Dendritic cell treated with granulocyte-macrophage colony-stimulating factor and Interleukin-4, amounts not matched to agents 40 ng/mL and 50 ng/mL, for 4 days (primary cell): ENCODE measurements at regions of chr18 and their contacts with region 1.

Region 1: GRCh38 chr18:11891737-11892136 is 16.4 kb downstream of the MPPE1 start:
- H3K4me3 Mint-ChIP-seq: no peak overlapping the region
- H3K27ac Mint-ChIP-seq: no peak overlapping the region
- H3K4me1 Mint-ChIP-seq: peaks cover 47% of the 10 kb centered on the region
- H3K27me3 Mint-ChIP-seq: no peaks in the 10 kb centered on the region

Region 2: DNA sequence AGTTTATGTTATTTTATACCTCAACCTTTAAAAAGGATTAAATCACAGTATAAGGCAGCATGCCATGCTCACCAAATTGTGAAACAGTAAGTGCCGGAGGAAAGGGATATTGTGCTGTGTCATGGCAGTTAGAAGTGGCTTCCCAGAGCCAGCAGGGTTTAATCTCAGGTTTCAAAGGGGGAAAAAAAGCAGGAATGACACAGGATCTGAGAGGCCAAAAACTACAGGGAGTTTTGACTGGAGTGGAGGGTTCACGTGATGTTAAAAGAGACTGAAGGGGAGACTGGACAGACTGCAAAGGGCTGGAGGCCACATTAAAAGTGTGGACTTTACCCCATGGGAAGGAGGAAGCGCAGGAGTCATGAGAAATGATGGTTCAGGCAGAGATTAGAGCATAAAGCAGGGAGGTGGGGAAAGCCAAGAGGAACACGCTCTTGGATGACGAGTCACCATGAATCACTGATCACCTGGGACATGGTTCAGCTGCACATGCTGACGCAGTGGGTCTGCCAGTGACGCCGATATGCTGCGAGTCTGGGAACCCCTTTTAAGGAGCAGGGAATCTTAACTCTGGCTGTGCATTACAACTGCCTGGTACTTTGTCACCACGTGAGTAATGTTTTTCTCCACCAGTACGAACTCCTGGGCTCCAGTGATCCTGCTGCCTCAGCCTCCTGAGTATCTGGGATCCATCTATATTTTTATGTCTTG is 34.4 kb before region 1 on chr18:
- intact Hi-C with region 1: loop called (anchors 5 kb)
- H3K4me3 Mint-ChIP-seq: no peak overlapping the region
- H3K27ac Mint-ChIP-seq: peak overlapping the region; percentile 81
- H3K4me1 Mint-ChIP-seq: peaks cover 68% of the 10 kb centered on the region
- H3K27me3 Mint-ChIP-seq: no peaks in the 10 kb centered on the region